ENCODE measurements at regions of chr13 and their contacts with region 1.

Region 1: GRCh38 chr13:99528547-99528946 is 27.3 kb downstream of the TM9SF2 start:
- DNase-seq: peak; percentile 31
- H3K4me3 Mint-ChIP-seq: no peak overlapping the region
- H3K27ac Mint-ChIP-seq: no peak overlapping the region
- H3K4me1 Mint-ChIP-seq: peaks cover 37% of the 10 kb centered on the region
- H3K27me3 Mint-ChIP-seq: no peaks in the 10 kb centered on the region

Region 2: GRCh38 chr13:99386911-99387788 is 141.4 kb before region 1 on chr13:
- CTCF ChIA-PET with region 1: no interaction called
- POLR2A ChIA-PET with region 1: no interaction called
- intact Hi-C with region 1: no loop called
- DNase-seq: peak; percentile 92
- H3K4me3 Mint-ChIP-seq: no peak overlapping the region
- H3K27ac Mint-ChIP-seq: peak overlapping the region; percentile 61
- H3K4me1 Mint-ChIP-seq: peaks cover 64% of the 10 kb centered on the region
- H3K27me3 Mint-ChIP-seq: no peaks in the 10 kb centered on the region

Region 3: GRCh38 chr13:99617474-99618255 is 89.1 kb after region 1 on chr13:
- CTCF ChIA-PET with region 1: no interaction called
- POLR2A ChIA-PET with region 1: no interaction called
- intact Hi-C with region 1: loop called (anchors 5 kb)
- DNase-seq: peak; percentile 54
- H3K4me3 Mint-ChIP-seq: no peak overlapping the region
- H3K27ac Mint-ChIP-seq: no peak overlapping the region
- H3K4me1 Mint-ChIP-seq: peaks cover 10% of the 10 kb centered on the region
- H3K27me3 Mint-ChIP-seq: no peaks in the 10 kb centered on the region

Measured in activated CD4-positive, alpha-beta memory T cell treated with anti-CD3 and anti-CD28 coated beads for 36 hours (primary cell).